MCF 10A (cell line): ENCODE measurements at regions of chr5 and their contacts with region 1.

Region 1: GRCh38 chr5:131926168-131926567 is 19.3 kb downstream of the MEIKIN start:
- DNase-seq: no peak
- H3K4me3 Mint-ChIP-seq: no peak overlapping the region
- H3K27ac Mint-ChIP-seq: no peak overlapping the region
- H3K4me1 Mint-ChIP-seq: no peaks in the 10 kb centered on the region
- H3K27me3 Mint-ChIP-seq: peaks cover 82% of the 10 kb centered on the region
- CTCF ChIP-seq: no peak

Region 2: GRCh38 chr5:130580264-130580663 is 1345.9 kb before region 1 on chr5:
- CTCF ChIA-PET with region 1: no interaction called
- POLR2A ChIA-PET with region 1: no interaction called
- intact Hi-C with region 1: loop called (anchors 5 kb)
- DNase-seq: no peak
- H3K4me3 Mint-ChIP-seq: no peak overlapping the region
- H3K27ac Mint-ChIP-seq: no peak overlapping the region
- H3K4me1 Mint-ChIP-seq: no peaks in the 10 kb centered on the region
- H3K27me3 Mint-ChIP-seq: no peaks in the 10 kb centered on the region
- CTCF ChIP-seq: no peak

Region 3: GRCh38 chr5:131899692-131900091 is 26.5 kb before region 1 on chr5:
- CTCF ChIA-PET with region 1: no interaction called
- POLR2A ChIA-PET with region 1: no interaction called
- intact Hi-C with region 1: no loop called
- DNase-seq: peak; percentile 22
- H3K4me3 Mint-ChIP-seq: no peak overlapping the region
- H3K27ac Mint-ChIP-seq: no peak overlapping the region
- H3K4me1 Mint-ChIP-seq: no peaks in the 10 kb centered on the region
- H3K27me3 Mint-ChIP-seq: peaks cover 54% of the 10 kb centered on the region
- CTCF ChIP-seq: no peak